ENCODE measurements at regions of chr11 and their contacts with region 1.

Region 1: DNA sequence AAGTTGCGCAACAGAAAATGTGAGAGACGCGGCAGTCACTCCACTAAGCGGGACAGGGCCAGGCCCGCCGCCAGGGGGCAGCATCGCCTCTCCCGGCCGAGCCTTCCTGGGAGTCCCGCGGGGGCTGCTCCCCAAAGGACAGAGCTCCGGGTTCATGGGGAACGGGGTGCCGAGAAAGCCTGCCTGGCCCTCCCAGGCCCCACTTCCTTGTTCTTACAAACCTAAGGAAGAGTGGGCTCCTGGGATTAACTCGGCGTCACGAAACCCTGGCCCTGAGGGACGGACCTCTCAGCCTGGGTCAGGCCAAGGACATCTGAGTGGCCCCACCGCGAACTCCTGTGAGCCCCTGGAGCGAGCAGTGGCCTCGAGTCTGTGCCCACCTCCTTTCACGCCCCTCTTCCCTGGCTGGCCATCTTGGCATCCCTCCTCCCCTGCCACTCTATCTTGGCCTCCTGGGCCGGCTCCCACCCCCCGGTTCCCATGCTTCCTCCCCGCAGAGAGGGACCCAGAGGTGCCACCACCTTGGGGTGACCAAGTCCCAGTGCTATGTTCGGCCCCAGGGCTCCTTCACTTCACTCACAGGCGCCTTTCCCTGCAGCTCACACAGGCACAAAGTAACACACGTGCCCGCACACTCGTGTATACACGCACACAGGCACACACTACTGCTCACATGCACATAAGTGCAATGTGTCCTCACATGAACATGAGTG is 99.9 kb upstream of the FGF3 start:
- DNase-seq: peak; percentile 89
- H3K4me3 ChIP-seq: peak overlapping the region in 1 of 2 experiments; percentile 54; a peak in 1 of 4 replicates
- H3K27ac ChIP-seq: no peak overlapping the region
- H3K4me1 ChIP-seq: peaks cover 0 to 10% of the 10 kb centered on the region in 2 experiments; a peak in 1 of 4 replicates
- H3K27me3 ChIP-seq: no peaks in the 10 kb centered on the region
- CTCF ChIP-seq: peak; percentile 89
- EP300 ChIP-seq: no peak
- RAD21 ChIP-seq: peak; percentile 80

Region 2: DNA sequence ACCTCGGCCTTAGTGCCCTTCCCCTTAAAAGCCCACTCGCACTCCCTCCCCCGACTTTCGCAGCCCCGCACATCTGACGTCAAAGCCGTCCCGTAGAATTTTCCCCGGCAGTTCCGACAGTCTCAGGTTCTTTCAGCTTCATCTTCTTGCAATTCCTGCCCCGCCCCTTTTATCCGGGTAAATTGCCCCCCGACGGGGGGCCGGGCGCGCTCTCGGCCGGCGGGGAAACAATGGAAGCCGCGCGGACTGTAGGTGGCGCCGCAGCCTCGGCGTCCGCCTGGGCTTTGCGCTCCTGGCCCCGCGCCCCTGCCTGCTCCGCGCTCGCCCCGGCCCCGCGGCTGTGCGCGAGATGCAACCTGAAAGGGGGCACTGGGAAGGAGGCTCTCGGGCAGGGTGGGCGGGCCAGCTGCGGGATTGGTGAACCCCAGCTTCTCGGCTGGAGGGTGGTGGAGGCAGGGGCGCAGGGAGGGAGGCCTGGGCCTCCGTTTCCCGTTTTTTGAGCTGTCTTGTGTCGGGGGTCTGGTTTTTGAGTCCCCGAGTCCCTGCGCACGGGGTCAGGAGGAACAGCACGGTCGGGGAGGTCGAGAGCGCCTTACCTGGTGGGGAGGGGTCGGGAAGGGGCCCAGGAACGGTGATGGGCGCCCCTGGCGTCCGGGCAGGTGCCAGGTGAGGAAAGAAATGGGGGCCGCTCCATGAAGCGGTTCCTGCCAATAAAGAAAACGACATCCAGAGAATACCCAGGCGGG is 214.4 kb before region 1 on chr11:
- CTCF ChIA-PET with region 1: interaction called, 21 read pairs
- POLR2A ChIA-PET with region 1: no interaction called
- DNase-seq: peak; percentile 91
- H3K4me3 ChIP-seq: peak overlapping the region; percentile 31 to 41; a peak in 3 of 4 replicates
- H3K27ac ChIP-seq: no peak overlapping the region
- H3K4me1 ChIP-seq: peaks cover 0 to 13% of the 10 kb centered on the region in 2 experiments; a peak in 2 of 4 replicates
- H3K27me3 ChIP-seq: peaks cover 38% of the 10 kb centered on the region
- CTCF ChIP-seq: peak; percentile 68
- EP300 ChIP-seq: no peak
- RAD21 ChIP-seq: peak; percentile 73

Region 3: GRCh38 chr11:69943066-69943465 is 24.0 kb after region 1 on chr11:
- CTCF ChIA-PET with region 1: interaction called, 15 read pairs
- POLR2A ChIA-PET with region 1: no interaction called
- DNase-seq: no peak
- H3K4me3 ChIP-seq: no peak overlapping the region
- H3K27ac ChIP-seq: no peak overlapping the region
- H3K4me1 ChIP-seq: peaks cover 0 to 14% of the 10 kb centered on the region in 2 experiments; a peak in 1 of 4 replicates
- H3K27me3 ChIP-seq: peaks cover 15% of the 10 kb centered on the region; the same call in 1 of the 2 replicates
- CTCF ChIP-seq: peak; percentile 20; the same call in 1 of the 2 replicates
- EP300 ChIP-seq: no peak
- RAD21 ChIP-seq: peak; percentile 43

Region 4: GRCh38 chr11:70169632-70170031 is 250.5 kb after region 1 on chr11:
- CTCF ChIA-PET with region 1: interaction called, 11 read pairs
- POLR2A ChIA-PET with region 1: no interaction called
- DNase-seq: no peak
- H3K4me3 ChIP-seq: no peak overlapping the region
- H3K27ac ChIP-seq: no peak overlapping the region
- H3K4me1 ChIP-seq: no peaks in the 10 kb centered on the region; a peak in 1 of 4 replicates
- H3K27me3 ChIP-seq: no peaks in the 10 kb centered on the region
- CTCF ChIP-seq: no peak
- EP300 ChIP-seq: no peak
- RAD21 ChIP-seq: no peak

Region 5: GRCh38 chr11:70191495-70192140 is 272.5 kb after region 1 on chr11:
- CTCF ChIA-PET with region 1: interaction called, 105 read pairs
- POLR2A ChIA-PET with region 1: interaction called, 3 read pairs
- DNase-seq: peak; percentile 88
- H3K4me3 ChIP-seq: no peak overlapping the region; a peak in 1 of 4 replicates
- H3K27ac ChIP-seq: no peak overlapping the region
- H3K4me1 ChIP-seq: no peaks in the 10 kb centered on the region
- H3K27me3 ChIP-seq: peaks cover 14% of the 10 kb centered on the region
- CTCF ChIP-seq: peak; percentile 70
- EP300 ChIP-seq: no peak
- RAD21 ChIP-seq: peak; percentile 92

Measured in SK-N-SH (cell line).